Gastrocnemius medialis (tissue), 4 donors: ENCODE measurements at regions of chr13 and their contacts with region 1.

Region 1: DNA sequence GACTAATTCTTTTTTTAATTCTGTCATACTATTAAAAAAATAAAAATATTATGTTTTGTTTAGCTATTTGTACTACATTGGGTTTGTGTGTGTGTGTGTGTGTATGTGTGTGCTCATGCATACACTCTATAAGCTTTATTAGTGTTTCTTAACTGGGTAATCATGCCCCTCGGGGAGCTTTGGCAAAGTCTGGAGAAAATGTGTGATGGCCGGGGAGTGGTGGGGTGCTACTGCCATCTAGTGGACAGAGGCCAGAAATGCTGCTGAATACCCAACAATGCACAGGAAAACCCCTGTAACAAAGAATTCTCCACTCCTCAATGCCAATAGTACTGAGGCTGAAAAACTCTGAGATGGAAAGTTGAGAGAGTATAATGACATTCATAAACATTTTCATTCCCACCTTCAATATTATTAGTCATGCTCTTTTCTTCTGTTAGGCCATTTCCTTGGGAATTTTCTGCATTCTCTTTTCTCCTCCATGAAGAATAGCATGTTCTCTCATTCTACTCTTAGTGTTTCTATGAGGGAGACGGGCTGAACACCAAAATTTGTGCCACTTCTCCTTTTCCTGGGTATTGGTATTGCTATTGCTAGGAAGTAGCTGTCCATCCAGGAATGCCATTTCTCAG is 157.3 kb downstream of the DNAJC3 start:
- DNase-seq: peak; percentile 6 to 33
- ATAC-seq: peak; percentile 33 to 64
- H3K4me3 ChIP-seq: no peak overlapping the region
- H3K27ac ChIP-seq: no peak overlapping the region
- H3K4me1 ChIP-seq: peaks cover 0 to 4% of the 10 kb centered on the region in 2 donors
- H3K27me3 ChIP-seq: no peaks in the 10 kb centered on the region
- CTCF ChIP-seq: peak; percentile 87 to 95 (median 92)
- POLR2A ChIP-seq: no peak

Region 2: DNA sequence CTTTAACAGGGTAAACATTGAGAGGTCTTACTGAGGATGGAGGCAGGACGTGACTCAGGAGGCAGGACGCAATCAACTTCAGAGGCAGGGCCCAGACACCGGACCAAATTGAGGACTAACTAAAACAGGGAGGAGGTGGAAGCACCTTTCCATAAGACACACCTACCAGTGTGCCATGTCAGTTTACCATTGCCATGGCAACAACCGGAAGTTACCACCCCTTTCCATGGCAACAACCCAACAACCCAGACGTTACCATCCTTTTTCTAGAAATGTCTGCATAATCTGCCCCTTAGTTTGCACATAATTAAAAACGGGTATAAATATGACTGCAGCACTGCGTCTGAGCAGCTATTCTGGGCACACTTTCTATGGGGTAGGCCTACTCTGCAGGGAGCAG is 1068.4 kb before region 1 on chr13:
- in situ Hi-C with region 1: no loop called
- intact Hi-C with region 1: no loop called
- DNase-seq: no peak
- ATAC-seq: no peak
- H3K4me3 ChIP-seq: no peak overlapping the region
- H3K27ac ChIP-seq: no peak overlapping the region
- H3K4me1 ChIP-seq: no peaks in the 10 kb centered on the region
- H3K27me3 ChIP-seq: no peaks in the 10 kb centered on the region
- CTCF ChIP-seq: no peak
- POLR2A ChIP-seq: no peak

Region 3: GRCh38 chr13:95191821-95192563 is 642.3 kb before region 1 on chr13:
- in situ Hi-C with region 1: no loop called
- intact Hi-C with region 1: loop called (anchors 10 kb)
- DNase-seq: peak; percentile 31 to 72
- ATAC-seq: peak; percentile 60 to 69
- H3K4me3 ChIP-seq: no peak overlapping the region
- H3K27ac ChIP-seq: peak overlapping the region; percentile 43 to 70 (median 60)
- H3K4me1 ChIP-seq: peaks cover 18 to 23% of the 10 kb centered on the region in 2 donors
- H3K27me3 ChIP-seq: no peaks in the 10 kb centered on the region
- CTCF ChIP-seq: peak; percentile 74 to 83 (median 80)
- POLR2A ChIP-seq: no peak

Region 4: DNA sequence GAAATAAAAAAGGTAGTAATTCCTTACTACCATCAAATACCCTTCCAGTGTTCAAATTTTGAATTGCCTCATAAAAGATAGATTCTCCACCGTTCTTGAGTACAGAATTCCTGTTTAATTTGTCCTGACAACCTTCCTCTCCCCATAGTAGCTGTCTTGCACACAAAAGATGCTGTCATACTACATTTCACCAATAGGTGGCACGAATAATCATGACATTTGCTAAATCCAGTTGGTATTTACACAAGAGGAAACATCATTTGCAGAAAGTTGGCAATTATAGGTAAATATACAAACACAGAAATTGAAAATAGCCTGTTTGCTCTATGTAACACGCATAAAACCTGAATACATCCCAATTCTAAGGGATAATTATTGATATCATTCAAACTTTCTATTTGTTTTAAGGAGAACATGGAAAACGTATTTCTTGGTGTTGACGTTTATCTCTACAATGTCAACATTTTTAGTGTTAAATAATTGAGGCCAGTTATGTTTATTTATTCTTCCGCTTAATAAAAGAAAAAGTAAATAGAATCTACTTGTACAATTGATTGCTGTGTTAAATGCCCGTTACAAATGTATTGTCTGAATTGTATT is 340.1 kb before region 1 on chr13:
- in situ Hi-C with region 1: loop called in 1 of 4 experiments (anchors 25 kb)
- intact Hi-C with region 1: no loop called
- DNase-seq: no peak
- ATAC-seq: no peak
- H3K4me3 ChIP-seq: no peak overlapping the region
- H3K27ac ChIP-seq: no peak overlapping the region
- H3K4me1 ChIP-seq: no peaks in the 10 kb centered on the region
- H3K27me3 ChIP-seq: no peaks in the 10 kb centered on the region
- CTCF ChIP-seq: peak; percentile 37 to 69 (median 44)
- POLR2A ChIP-seq: no peak

Region 5: DNA sequence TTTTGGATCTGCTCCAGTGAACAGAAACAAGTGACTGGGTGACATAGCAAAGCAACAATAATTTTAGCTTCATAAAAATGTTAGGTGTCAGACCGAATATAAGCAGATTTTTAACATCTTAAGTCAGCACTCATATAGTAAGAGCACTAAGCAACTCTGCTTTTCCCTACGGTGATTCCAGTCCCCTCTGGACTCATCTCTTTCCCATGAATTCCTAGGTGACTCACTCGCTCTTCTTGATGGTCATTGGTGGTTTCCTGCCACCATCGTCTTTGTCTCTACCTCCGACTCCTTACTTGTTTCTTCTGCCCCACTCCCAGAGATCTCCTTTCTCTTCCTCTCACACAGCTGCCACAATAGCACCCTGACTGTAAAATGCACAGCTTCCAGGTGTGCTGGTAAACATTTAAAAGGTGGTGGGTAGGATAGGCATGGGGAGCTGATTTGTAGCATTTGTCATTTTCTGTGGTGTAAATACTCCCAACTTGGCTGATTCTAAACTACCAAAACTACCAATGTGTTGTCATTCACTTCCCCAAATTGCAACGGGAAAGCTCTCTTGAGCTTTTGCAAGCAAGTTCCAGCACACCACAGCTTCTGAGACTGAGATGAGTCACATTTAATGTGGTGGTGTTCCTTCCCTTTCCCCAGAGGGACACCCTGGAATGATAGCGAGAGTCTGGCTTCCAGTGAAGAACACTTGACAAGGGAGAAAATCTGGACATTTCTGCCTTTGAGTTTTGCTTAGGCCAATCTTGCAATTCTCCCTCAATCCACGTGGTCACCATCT is 324.5 kb before region 1 on chr13:
- in situ Hi-C with region 1: loop called in 1 of 4 experiments (anchors 25 kb)
- intact Hi-C with region 1: no loop called
- DNase-seq: no peak
- ATAC-seq: no peak
- H3K4me3 ChIP-seq: no peak overlapping the region
- H3K27ac ChIP-seq: no peak overlapping the region
- H3K4me1 ChIP-seq: no peaks in the 10 kb centered on the region
- H3K27me3 ChIP-seq: no peaks in the 10 kb centered on the region
- CTCF ChIP-seq: no peak
- POLR2A ChIP-seq: no peak

Region 6: GRCh38 chr13:95614641-95615245 is 219.5 kb before region 1 on chr13:
- in situ Hi-C with region 1: loop called in 1 of 4 experiments (anchors 10 kb)
- intact Hi-C with region 1: no loop called
- DNase-seq: no peak
- ATAC-seq: no peak
- H3K4me3 ChIP-seq: no peak overlapping the region
- H3K27ac ChIP-seq: no peak overlapping the region
- H3K4me1 ChIP-seq: no peaks in the 10 kb centered on the region
- H3K27me3 ChIP-seq: no peaks in the 10 kb centered on the region
- CTCF ChIP-seq: no peak
- POLR2A ChIP-seq: no peak

Region 7: GRCh38 chr13:95624020-95624419 is 210.2 kb before region 1 on chr13:
- in situ Hi-C with region 1: loop called (anchors 5 to 10 kb)
- intact Hi-C with region 1: loop called (anchors 1 kb)
- DNase-seq: no peak
- ATAC-seq: peak; percentile 68 to 70
- H3K4me3 ChIP-seq: no peak overlapping the region
- H3K27ac ChIP-seq: no peak overlapping the region
- H3K4me1 ChIP-seq: no peaks in the 10 kb centered on the region
- H3K27me3 ChIP-seq: no peaks in the 10 kb centered on the region
- CTCF ChIP-seq: peak; percentile 29 to 78 (median 67)
- POLR2A ChIP-seq: no peak